Transverse colon (tissue), 4 donors: ENCODE measurements at regions of chr1 and their contacts with region 1.

Region 1: GRCh38 chr1:211680752-211681327 is 5.4 kb upstream of the NEK2 start:
- DNase-seq: peak; percentile 69
- H3K4me3 ChIP-seq: no peak overlapping the region
- H3K27ac ChIP-seq: no peak overlapping the region
- H3K4me1 ChIP-seq: peaks cover 0 to 9% (median 3%) of the 10 kb centered on the region in 4 donors
- H3K27me3 ChIP-seq: no peaks in the 10 kb centered on the region
- CTCF ChIP-seq: peak; percentile 58 to 90 (median 71)
- EP300 ChIP-seq: no peak
- POLR2A ChIP-seq: no peak

Region 2: DNA sequence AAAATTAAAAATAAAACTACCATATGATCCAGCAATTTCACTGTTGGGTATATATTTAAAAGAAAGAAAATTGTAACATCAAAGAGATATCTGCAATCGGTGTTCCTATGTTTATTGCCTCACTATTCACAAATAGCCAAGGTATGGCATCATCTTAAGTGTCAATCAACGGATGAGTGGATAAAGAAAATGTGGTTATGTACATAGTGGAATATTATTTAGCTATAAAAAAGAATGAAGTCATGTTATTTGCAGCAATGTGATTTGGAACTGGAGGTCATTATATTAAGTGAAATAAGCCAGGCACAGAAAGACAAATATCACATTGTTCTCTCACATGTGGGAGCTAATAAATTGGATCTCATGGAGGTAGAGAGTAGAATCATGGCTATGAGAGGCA is 265.1 kb before region 1 on chr1:
- in situ Hi-C with region 1: no loop called
- intact Hi-C with region 1: no loop called
- DNase-seq: no peak
- H3K4me3 ChIP-seq: no peak overlapping the region
- H3K27ac ChIP-seq: peak overlapping the region in 1 of 4 donors; percentile 78
- H3K4me1 ChIP-seq: no peaks in the 10 kb centered on the region
- H3K27me3 ChIP-seq: no peaks in the 10 kb centered on the region
- CTCF ChIP-seq: no peak
- EP300 ChIP-seq: no peak
- POLR2A ChIP-seq: no peak

Region 3: DNA sequence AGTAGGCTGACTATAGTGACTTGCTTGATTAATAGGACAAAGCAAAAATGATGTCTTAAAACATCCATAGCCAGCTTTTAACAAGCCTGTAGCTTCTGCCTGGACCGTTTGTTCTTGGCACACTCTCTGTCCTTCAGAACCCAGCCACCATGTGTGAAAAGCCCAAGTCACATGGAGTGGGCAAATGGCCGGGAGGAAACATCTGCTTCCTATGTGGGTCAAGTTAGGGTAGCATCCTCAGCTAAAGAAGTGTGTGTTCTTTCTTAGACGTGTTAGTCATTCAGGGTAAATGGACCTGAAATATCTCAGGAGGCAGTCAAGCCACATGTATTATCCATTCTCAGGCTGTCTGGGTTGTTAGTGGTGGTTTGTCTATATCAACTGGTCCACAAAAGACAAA is 212.2 kb before region 1 on chr1:
- in situ Hi-C with region 1: no loop called
- intact Hi-C with region 1: no loop called
- DNase-seq: no peak
- H3K4me3 ChIP-seq: no peak overlapping the region
- H3K27ac ChIP-seq: peak overlapping the region in 1 of 4 donors; percentile 6
- H3K4me1 ChIP-seq: peaks cover 0 to 5% (median 3%) of the 10 kb centered on the region in 4 donors
- H3K27me3 ChIP-seq: no peaks in the 10 kb centered on the region
- CTCF ChIP-seq: no peak
- EP300 ChIP-seq: no peak
- POLR2A ChIP-seq: no peak

Region 4: GRCh38 chr1:212432706-212433576 is 752.1 kb after region 1 on chr1 and contains the start of gene NENF:
- in situ Hi-C with region 1: loop called in 1 of 4 experiments (anchors 25 kb)
- intact Hi-C with region 1: no loop called
- DNase-seq: peak; percentile 90
- H3K4me3 ChIP-seq: peak within 1 kb of the TSS; percentile 83 to 93 (median 88)
- H3K27ac ChIP-seq: peak within 1 kb of the TSS; percentile 83 to 90 (median 86)
- H3K4me1 ChIP-seq: peaks cover 11 to 26% (median 17%) of the 10 kb centered on the region in 4 donors
- H3K27me3 ChIP-seq: no peaks in the 10 kb centered on the region
- CTCF ChIP-seq: no peak
- EP300 ChIP-seq: no peak
- POLR2A ChIP-seq: peak; percentile 52
- total RNA-seq, gene NENF: 24.2 to 91.5 (median 35.7) TPM